ENCODE measurements at regions of chr12 and their contacts with region 1.

Region 1: GRCh38 chr12:131850856-131851559 is 22.8 kb downstream of the MMP17 start:
- DNase-seq: no peak
- ATAC-seq: peak in 1 of 4 donors; percentile 97
- H3K4me3 ChIP-seq: peak overlapping the region; percentile 38
- H3K27ac ChIP-seq: no peak overlapping the region
- H3K4me1 ChIP-seq: no peaks in the 10 kb centered on the region
- H3K27me3 ChIP-seq: peaks cover 0 to 5% (median 0%) of the 10 kb centered on the region in 3 donors
- CTCF ChIP-seq: peak; percentile 93

Region 2: GRCh38 chr12:131473741-131474709 is 377.0 kb before region 1 on chr12:
- intact Hi-C with region 1: no loop called
- DNase-seq: no peak
- ATAC-seq: no peak
- H3K4me3 ChIP-seq: no peak overlapping the region
- H3K27ac ChIP-seq: no peak overlapping the region
- H3K4me1 ChIP-seq: no peaks in the 10 kb centered on the region
- H3K27me3 ChIP-seq: no peaks in the 10 kb centered on the region
- CTCF ChIP-seq: no peak

Region 3: DNA sequence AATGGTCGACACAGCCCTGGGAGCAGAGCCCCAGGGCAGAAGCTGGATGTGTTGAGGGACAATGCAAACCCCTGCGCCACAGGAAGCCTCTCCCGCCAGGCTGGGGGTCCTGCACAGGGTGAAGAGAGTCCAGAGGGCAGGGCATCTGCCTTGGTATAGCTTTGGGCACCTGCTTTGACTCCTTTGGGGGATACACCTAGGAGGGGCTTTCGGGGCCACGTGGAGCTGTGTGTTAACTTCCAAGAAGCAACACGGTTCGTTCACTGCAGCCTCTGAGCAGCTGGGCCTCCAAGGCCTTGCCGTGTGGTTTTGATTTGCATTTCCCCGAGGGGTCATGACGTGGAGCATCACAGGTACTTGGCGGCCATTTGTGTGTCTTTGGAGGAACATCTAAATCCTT is 72.3 kb after region 1 on chr12:
- intact Hi-C with region 1: loop called in 1 of 2 experiments (anchors 5 kb)
- DNase-seq: no peak
- ATAC-seq: no peak
- H3K4me3 ChIP-seq: no peak overlapping the region
- H3K27ac ChIP-seq: no peak overlapping the region
- H3K4me1 ChIP-seq: peaks cover 5% of the 10 kb centered on the region
- H3K27me3 ChIP-seq: no peaks in the 10 kb centered on the region
- CTCF ChIP-seq: no peak

Region 4: GRCh38 chr12:131949431-131950181 is 98.6 kb after region 1 on chr12 and contains the start of gene EP400:
- intact Hi-C with region 1: loop called in 1 of 2 experiments (anchors 5 kb)
- DNase-seq: peak; percentile 98
- ATAC-seq: peak; percentile 96 to 97 (median 97)
- H3K4me3 ChIP-seq: peak within 1 kb of the TSS; percentile 96
- H3K27ac ChIP-seq: peak within 1 kb of the TSS; percentile 71
- H3K4me1 ChIP-seq: peaks cover 21% of the 10 kb centered on the region
- H3K27me3 ChIP-seq: no peaks in the 10 kb centered on the region
- CTCF ChIP-seq: peak; percentile 42
- total RNA-seq, gene EP400: 18.4 to 24.5 (median 22.9) TPM

Region 5: GRCh38 chr12:132003846-132004245 is 152.8 kb after region 1 on chr12:
- intact Hi-C with region 1: loop called in 1 of 2 experiments (anchors 2 kb)
- DNase-seq: no peak
- ATAC-seq: no peak
- H3K4me3 ChIP-seq: no peak overlapping the region
- H3K27ac ChIP-seq: no peak overlapping the region
- H3K4me1 ChIP-seq: no peaks in the 10 kb centered on the region
- H3K27me3 ChIP-seq: no peaks in the 10 kb centered on the region
- CTCF ChIP-seq: no peak

Measured in psoas muscle (tissue), 8 donors.